ENCODE measurements at regions of chr3 and their contacts with region 1.

Region 1: DNA sequence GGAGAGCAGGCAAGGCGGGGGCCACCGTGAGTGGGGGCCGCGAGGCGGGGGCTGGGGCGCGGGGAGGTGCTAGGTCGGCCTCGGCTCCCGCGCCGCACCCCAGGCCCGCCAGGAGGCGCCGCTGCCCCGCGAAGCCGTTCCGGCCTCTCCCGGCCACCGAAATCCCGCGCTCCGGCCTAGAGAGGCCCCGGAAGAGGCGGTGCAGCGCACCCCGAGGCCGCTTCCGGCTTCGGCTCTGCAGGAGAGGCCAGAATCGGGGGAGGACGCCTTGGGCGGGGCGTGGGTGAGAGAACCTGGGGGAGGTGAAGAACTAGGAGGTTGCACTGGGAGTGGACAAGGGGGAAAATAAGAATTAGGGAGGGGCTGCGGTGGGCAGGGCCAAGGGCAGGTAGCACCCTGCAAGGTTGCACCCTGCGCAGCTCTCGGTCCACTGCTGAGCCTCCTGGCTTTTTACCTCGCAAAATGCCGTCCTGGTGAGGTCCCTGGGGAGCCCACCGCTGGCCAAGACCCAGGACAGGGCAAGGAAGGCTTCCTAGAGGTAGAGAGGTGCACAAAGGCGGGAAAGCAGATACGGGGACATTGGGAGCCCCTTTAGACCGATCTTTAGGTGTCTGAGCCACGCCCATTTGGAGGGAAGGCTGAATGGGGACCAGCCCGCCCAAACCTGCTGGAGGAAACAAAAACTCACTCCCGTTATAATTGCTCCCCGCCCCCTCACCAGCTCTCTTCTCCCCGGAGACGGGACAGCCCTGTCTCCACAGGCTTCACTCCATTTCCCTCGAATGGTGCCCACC is 8.4 kb upstream of the GNAI2 start:
- DNase-seq: peak; percentile 94
- CTCF ChIP-seq: peak; percentile 82

Region 2: DNA sequence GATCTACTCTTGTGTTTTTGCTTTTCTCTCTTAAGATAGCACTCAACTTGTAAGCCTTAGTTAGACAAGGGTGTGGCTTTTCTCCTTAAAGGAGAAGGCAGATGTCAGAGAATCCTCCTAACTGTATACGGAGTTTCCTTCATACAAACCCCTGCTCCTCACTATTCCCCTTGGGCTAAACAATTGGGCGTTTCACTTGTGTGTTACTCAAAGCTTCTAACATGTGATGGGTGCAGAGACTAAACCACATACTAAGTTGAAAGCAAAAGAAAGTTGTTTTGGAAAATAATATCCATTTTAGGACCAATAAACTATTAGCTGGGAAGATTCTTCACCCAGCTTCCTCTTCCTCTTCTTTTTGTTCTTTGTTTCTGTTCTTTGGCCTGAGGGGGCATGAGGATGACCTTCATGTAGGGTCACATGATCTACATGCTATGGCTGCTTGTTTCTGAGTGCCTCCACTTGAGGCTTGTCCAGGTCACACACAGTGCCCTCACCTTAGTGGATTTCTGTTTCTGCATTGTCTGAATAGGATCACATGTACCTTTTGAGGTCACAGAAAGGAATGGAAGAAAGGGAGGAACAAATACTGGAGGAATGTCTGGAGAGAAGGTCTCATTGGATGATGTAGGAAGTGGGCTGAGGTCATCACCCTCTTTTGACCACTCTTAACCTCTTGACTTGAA is 1908.7 kb before region 1 on chr3:
- CTCF ChIA-PET with region 1: no interaction called
- POLR2A ChIA-PET with region 1: no interaction called
- DNase-seq: no peak
- CTCF ChIP-seq: no peak

Region 3: GRCh38 chr3:49656541-49657112 is 571.0 kb before region 1 on chr3:
- CTCF ChIA-PET with region 1: no interaction called
- POLR2A ChIA-PET with region 1: no interaction called
- DNase-seq: no peak
- CTCF ChIP-seq: peak; percentile 8

Region 4: DNA sequence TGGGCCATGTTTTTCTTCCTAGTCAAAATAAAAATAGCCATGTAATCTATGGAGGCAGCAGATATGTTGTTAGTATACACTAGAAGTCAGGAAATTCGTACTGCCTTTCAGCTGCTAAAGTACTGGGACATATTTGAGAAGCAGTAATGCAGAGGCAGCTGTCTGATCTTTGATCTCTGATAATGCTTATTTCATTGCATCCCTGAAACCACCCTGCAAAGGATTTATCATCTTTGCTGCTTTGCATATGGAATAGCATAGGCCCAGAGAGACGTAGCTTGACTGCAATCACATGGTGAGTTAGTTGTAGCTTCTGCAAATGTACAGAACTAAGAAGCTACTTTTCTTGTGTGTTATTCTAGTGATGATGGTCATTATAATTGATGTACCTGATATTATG is 235.3 kb before region 1 on chr3:
- CTCF ChIA-PET with region 1: no interaction called
- POLR2A ChIA-PET with region 1: no interaction called
- DNase-seq: no peak
- CTCF ChIP-seq: no peak

Region 5: DNA sequence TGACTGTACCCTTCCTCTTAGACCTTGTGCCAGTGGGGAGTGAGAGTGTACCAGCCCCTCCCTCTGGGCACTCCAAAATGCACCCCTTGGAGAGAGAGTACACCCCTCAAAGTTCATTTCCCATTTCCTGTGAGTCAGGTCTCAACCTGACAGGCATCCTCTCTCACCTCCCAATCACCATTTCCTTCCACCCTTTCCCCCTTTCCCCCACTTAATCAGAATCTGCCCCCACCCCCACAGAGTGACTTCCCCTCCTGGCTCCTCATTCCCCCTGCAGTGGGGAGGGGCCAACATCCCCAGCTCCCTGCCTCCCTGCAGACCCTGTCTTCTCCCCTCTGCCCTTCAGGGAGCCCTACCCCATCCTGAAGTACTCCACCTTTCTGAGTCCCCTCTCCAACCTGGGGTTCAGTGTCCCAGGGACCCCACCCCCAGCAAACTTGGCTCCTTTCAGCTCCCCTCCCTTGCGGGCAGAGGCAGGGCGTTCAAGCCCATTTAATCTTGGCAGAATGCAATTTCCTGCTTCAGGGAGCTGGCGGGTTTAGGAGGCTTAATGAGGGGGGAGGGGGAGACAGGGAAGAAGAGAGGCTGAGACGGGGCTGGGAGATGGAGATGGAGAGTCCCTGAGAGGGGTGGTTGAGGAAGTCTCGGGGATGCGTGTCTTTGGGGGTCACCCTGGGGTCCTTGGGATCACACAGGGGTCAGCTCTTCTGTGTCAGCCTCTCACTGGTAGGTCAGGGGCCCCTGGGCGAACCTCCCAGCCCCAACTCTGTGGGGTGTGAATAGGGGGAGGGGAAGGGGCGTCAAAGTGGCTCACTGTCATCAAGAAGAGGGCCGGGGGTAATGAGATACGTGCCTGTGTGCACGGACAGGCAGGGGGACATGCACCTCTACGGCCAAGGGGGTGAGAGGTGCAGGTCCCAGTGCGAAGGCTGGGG is 89.1 kb before region 1 on chr3:
- CTCF ChIA-PET with region 1: interaction called, 10 read pairs
- POLR2A ChIA-PET with region 1: no interaction called
- DNase-seq: no peak
- CTCF ChIP-seq: no peak

Region 6: GRCh38 chr3:50211930-50212329 is 15.7 kb before region 1 on chr3:
- CTCF ChIA-PET with region 1: interaction called, 59 read pairs
- POLR2A ChIA-PET with region 1: no interaction called
- DNase-seq: no peak
- CTCF ChIP-seq: no peak

Region 7: GRCh38 chr3:50260027-50260941 is 32.7 kb after region 1 on chr3:
- CTCF ChIA-PET with region 1: interaction called, 88 read pairs
- POLR2A ChIA-PET with region 1: interaction called, 11 read pairs
- DNase-seq: peak; percentile 98
- CTCF ChIP-seq: peak; percentile 99